ENCODE measurements at regions of chr11 and their contacts with region 1.

Region 1: DNA sequence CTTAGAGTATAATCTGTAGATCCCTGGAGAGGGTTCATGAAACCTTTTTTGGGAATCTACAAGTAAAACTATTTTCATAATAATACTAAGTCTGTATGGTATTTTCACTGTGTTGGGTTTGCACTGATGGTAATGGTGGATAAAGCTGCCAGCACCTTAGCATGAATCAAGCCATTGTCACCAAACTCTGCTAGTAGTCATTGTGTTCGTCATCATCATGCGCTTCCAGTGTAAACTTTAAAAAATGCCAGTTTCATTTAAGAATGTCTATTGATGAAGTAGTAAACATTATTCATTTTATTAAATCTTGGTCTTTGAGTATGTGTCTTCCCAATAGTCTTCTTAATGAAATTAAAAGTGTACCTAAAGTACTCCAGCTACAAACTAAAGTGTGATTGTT is 15.0 kb downstream of the ALKBH3 start:
- DNase-seq: no peak
- H3K4me3 ChIP-seq: no peak overlapping the region
- H3K27ac ChIP-seq: no peak overlapping the region
- H3K4me1 ChIP-seq: peaks cover 13% of the 10 kb centered on the region
- H3K27me3 ChIP-seq: no peaks in the 10 kb centered on the region
- CTCF ChIP-seq: no peak

Region 2: DNA sequence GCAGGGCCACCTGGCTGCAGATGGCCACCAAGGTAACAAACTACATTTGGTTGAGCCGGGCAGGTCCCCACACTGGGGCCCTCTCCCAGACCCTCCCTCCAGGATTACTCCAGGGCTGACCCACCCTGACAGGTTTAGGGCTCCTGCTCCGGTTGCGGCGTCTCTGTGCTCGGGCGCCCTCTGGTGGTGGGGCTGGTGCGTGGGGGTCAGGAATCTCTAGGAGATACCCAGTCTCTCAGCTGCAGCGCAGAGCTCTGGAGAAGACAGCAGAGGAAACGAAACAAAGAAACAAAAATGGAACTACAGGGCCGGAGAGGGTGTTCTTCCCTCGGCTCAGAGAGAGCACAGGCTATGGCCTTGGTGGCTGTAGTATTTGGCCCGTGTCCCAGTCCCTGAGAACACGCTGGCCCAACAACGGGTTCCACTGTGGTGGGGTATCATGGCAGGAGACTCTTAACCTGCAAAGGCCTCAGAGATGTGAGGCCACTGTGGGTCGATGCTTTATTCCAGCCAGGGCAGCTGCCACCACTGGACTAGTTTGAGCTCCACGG is 49.2 kb after region 1 on chr11:
- CTCF ChIA-PET with region 1: no interaction called
- POLR2A ChIA-PET with region 1: no interaction called
- intact Hi-C with region 1: loop called (anchors 1 kb)
- DNase-seq: peak in 1 of 2 experiments; percentile 80
- H3K4me3 ChIP-seq: no peak overlapping the region; the same call in 1 of the 2 replicates
- H3K27ac ChIP-seq: no peak overlapping the region
- H3K4me1 ChIP-seq: peaks cover 6% of the 10 kb centered on the region; the same call in 1 of the 2 replicates
- H3K27me3 ChIP-seq: peaks cover 77% of the 10 kb centered on the region
- CTCF ChIP-seq: peak; percentile 97

Region 3: GRCh38 chr11:44036811-44037657 is 141.4 kb after region 1 on chr11:
- CTCF ChIA-PET with region 1: no interaction called
- POLR2A ChIA-PET with region 1: no interaction called
- intact Hi-C with region 1: loop called (anchors 1 kb)
- DNase-seq: peak; percentile 42 to 44
- H3K4me3 ChIP-seq: no peak overlapping the region
- H3K27ac ChIP-seq: no peak overlapping the region
- H3K4me1 ChIP-seq: no peaks in the 10 kb centered on the region
- H3K27me3 ChIP-seq: peaks cover 38% of the 10 kb centered on the region
- CTCF ChIP-seq: peak; percentile 82